ENCODE measurements at regions of chr3 and their contacts with region 1.

Region 1: GRCh38 chr3:57100046-57100695 is 39.7 kb downstream of the SPATA12 start:
- DNase-seq: peak; percentile 61
- ATAC-seq: peak; percentile 93
- H3K4me3 ChIP-seq: no peak overlapping the region
- H3K27ac ChIP-seq: no peak overlapping the region
- H3K4me1 ChIP-seq: peaks cover 0 to 19% of the 10 kb centered on the region in 2 experiments; a peak in 2 of 4 replicates
- H3K27me3 ChIP-seq: no peaks in the 10 kb centered on the region
- CTCF ChIP-seq: peak; percentile 79 to 92 (median 83)
- POLR2A ChIP-seq: no peak
- RAD21 ChIP-seq: peak; percentile 92

Region 2: GRCh38 chr3:57060089-57060829 is 39.9 kb before region 1 on chr3 and contains the start of gene SPATA12:
- CTCF ChIA-PET with region 1: no interaction called
- POLR2A ChIA-PET with region 1: no interaction called
- RAD21 ChIA-PET with region 1: no interaction called
- intact Hi-C with region 1: no loop called
- DNase-seq: peak; percentile 96
- ATAC-seq: peak; percentile 94
- H3K4me3 ChIP-seq: peak within 1 kb of the TSS; percentile 25 to 54
- H3K27ac ChIP-seq: peak within 1 kb of the TSS; percentile 81
- H3K4me1 ChIP-seq: peaks cover 53 to 88% of the 10 kb centered on the region in 2 experiments
- H3K27me3 ChIP-seq: no peaks in the 10 kb centered on the region
- CTCF ChIP-seq: no peak
- POLR2A ChIP-seq: no peak
- RAD21 ChIP-seq: no peak
- total RNA-seq, gene SPATA12: 0.22 TPM

Region 3: GRCh38 chr3:57078344-57078634 is 21.9 kb before region 1 on chr3:
- CTCF ChIA-PET with region 1: no interaction called
- POLR2A ChIA-PET with region 1: no interaction called
- RAD21 ChIA-PET with region 1: no interaction called
- intact Hi-C with region 1: no loop called
- DNase-seq: no peak
- ATAC-seq: no peak
- H3K4me3 ChIP-seq: peak overlapping the region; percentile 75 to 94
- H3K27ac ChIP-seq: peak overlapping the region; percentile 72; the same call in 1 of the 2 replicates
- H3K4me1 ChIP-seq: peaks cover 18 to 77% of the 10 kb centered on the region in 2 experiments
- H3K27me3 ChIP-seq: no peaks in the 10 kb centered on the region
- CTCF ChIP-seq: no peak
- POLR2A ChIP-seq: no peak
- RAD21 ChIP-seq: no peak

Region 4: DNA sequence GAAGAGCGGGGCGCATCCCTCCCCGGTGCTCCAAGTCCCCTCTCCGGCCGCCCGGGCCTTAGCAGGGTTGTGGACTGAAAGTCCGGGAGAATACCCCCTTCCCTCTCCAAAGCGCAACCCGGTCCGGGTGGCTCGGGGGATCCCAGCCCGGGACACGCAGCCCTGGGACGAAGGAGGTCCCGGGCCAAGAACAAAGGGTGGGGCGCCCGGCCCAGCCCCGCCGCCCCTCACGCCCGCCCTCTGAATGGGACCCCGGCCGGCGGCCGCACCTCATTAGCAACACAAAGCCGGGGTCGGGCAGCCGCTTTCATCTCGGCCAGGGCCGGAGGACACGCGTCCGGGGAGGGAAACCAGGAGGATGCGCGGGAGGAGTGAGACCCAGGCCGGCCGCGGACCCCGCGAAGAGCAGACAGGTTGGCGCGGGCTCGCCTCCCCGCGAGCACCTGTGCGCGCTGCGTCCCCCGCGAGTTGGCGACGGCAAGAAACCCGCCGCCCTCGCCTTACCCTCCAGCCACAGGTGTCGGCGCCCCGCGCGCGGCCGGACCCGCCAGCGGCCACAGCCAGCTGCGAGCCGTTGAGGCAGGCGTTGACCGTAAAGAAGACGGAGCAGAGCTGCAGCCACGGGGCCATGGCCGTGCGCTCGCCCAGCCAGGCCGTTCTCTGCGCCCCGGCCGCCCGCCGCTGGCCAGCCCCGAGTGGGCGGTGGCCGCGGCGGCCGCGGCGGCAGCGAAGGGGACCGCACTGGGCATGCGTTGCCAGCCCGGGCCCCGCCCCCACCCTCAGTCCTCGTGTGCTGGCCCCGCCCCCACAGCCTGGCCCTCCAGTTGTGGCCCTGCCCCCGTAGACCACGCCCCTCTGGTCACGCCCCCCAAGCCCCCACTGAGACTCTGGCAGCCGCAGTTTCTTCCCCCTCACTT is 64.7 kb after region 1 on chr3 and contains the start of gene IL17RD:
- CTCF ChIA-PET with region 1: no interaction called
- POLR2A ChIA-PET with region 1: no interaction called
- RAD21 ChIA-PET with region 1: no interaction called
- intact Hi-C with region 1: loop called (anchors 5 kb)
- DNase-seq: peak; percentile 58
- ATAC-seq: peak; percentile 87
- H3K4me3 ChIP-seq: peak within 1 kb of the TSS; percentile 59 to 67
- H3K27ac ChIP-seq: peak within 1 kb of the TSS; percentile 32; the same call in 1 of the 2 replicates
- H3K4me1 ChIP-seq: peaks cover 11 to 20% of the 10 kb centered on the region in 2 experiments; a peak in 2 of 4 replicates
- H3K27me3 ChIP-seq: no peaks in the 10 kb centered on the region
- CTCF ChIP-seq: no peak
- POLR2A ChIP-seq: no peak
- RAD21 ChIP-seq: no peak
- total RNA-seq, gene IL17RD: 12.3 TPM

Region 5: GRCh38 chr3:57221883-57222282 is 121.7 kb after region 1 on chr3:
- CTCF ChIA-PET with region 1: no interaction called
- POLR2A ChIA-PET with region 1: no interaction called
- RAD21 ChIA-PET with region 1: no interaction called
- intact Hi-C with region 1: loop called (anchors 2 kb)
- DNase-seq: no peak
- ATAC-seq: peak; percentile 49; the same call in 1 of the 2 replicates
- H3K4me3 ChIP-seq: no peak overlapping the region
- H3K27ac ChIP-seq: no peak overlapping the region
- H3K4me1 ChIP-seq: peaks cover 0 to 4% of the 10 kb centered on the region in 2 experiments; a peak in 2 of 4 replicates
- H3K27me3 ChIP-seq: no peaks in the 10 kb centered on the region
- CTCF ChIP-seq: peak in 2 of 3 experiments; percentile 27 to 43; a peak in 2 of 6 replicates
- POLR2A ChIP-seq: no peak
- RAD21 ChIP-seq: peak; percentile 69

Region 6: DNA sequence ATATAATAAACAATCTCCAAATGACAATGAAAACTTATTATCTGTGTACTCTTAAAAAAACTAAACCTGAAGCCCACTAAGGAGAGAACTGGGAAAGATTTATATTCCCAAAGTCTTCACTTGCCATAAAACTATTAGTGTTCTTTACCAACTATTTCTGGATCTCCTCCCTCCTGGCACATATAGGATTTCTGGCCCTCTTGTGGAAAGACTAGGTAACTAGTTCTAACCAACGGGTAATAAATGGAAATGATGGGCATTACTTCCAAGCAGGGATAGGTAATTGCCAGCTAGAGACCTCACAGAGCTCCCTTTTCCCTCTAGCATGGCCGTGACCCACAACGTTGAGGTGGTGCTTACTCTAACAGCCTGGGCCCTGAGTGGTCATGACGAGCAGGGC is 333.9 kb after region 1 on chr3:
- CTCF ChIA-PET with region 1: no interaction called
- POLR2A ChIA-PET with region 1: no interaction called
- RAD21 ChIA-PET with region 1: no interaction called
- intact Hi-C with region 1: loop called (anchors 2 kb)
- DNase-seq: peak; percentile 62
- ATAC-seq: peak; percentile 96
- H3K4me3 ChIP-seq: no peak overlapping the region
- H3K27ac ChIP-seq: no peak overlapping the region
- H3K4me1 ChIP-seq: no peaks in the 10 kb centered on the region
- H3K27me3 ChIP-seq: no peaks in the 10 kb centered on the region
- CTCF ChIP-seq: peak; percentile 53 to 64 (median 63); a peak in 5 of 6 replicates
- POLR2A ChIP-seq: no peak
- RAD21 ChIP-seq: peak; percentile 70

Region 7: GRCh38 chr3:57569859-57570450 is 469.8 kb after region 1 on chr3:
- CTCF ChIA-PET with region 1: no interaction called
- POLR2A ChIA-PET with region 1: no interaction called
- RAD21 ChIA-PET with region 1: no interaction called
- intact Hi-C with region 1: loop called (anchors 10 kb)
- DNase-seq: no peak
- ATAC-seq: no peak
- H3K4me3 ChIP-seq: no peak overlapping the region
- H3K27ac ChIP-seq: no peak overlapping the region
- H3K4me1 ChIP-seq: no peaks in the 10 kb centered on the region
- H3K27me3 ChIP-seq: no peaks in the 10 kb centered on the region
- CTCF ChIP-seq: no peak
- POLR2A ChIP-seq: no peak
- RAD21 ChIP-seq: no peak

Region 8: GRCh38 chr3:57852896-57853295 is 752.7 kb after region 1 on chr3:
- CTCF ChIA-PET with region 1: interaction called, 6 read pairs
- POLR2A ChIA-PET with region 1: no interaction called
- RAD21 ChIA-PET with region 1: no interaction called
- intact Hi-C with region 1: loop called (anchors 10 kb)
- DNase-seq: no peak
- ATAC-seq: no peak
- H3K4me3 ChIP-seq: no peak overlapping the region
- H3K27ac ChIP-seq: no peak overlapping the region
- H3K4me1 ChIP-seq: no peaks in the 10 kb centered on the region
- H3K27me3 ChIP-seq: no peaks in the 10 kb centered on the region
- CTCF ChIP-seq: peak in 2 of 3 experiments; percentile 25 to 48; a peak in 3 of 6 replicates
- POLR2A ChIP-seq: no peak
- RAD21 ChIP-seq: peak; percentile 58